H1 (cell line): ENCODE measurements at regions of chr3 and their contacts with region 1.

Region 1: GRCh38 chr3:52231502-52232293 is 6.3 kb upstream of the TLR9 start:
- DNase-seq: peak in 1 of 2 experiments; percentile 97
- H3K4me3 ChIP-seq: no peak overlapping the region
- H3K27ac ChIP-seq: no peak overlapping the region
- H3K4me1 ChIP-seq: peaks cover 0 to 11% (median 5%) of the 10 kb centered on the region in 4 experiments; a peak in 5 of 7 replicates
- H3K27me3 ChIP-seq: no peaks in the 10 kb centered on the region
- CTCF ChIP-seq: peak in 2 of 3 experiments; percentile 84 to 98; a peak in 3 of 4 replicates
- EP300 ChIP-seq: no peak
- POLR2A ChIP-seq: no peak
- RAD21 ChIP-seq: peak; percentile 79 to 81

Region 2: GRCh38 chr3:52245322-52246263 is 13.9 kb after region 1 on chr3 and contains the start of gene PPM1M:
- CTCF ChIA-PET with region 1: interaction called, 336 read pairs
- POLR2A ChIA-PET with region 1: interaction called, 27 read pairs
- DNase-seq: peak in 1 of 2 experiments; percentile 83
- H3K4me3 ChIP-seq: peak within 1 kb of the TSS; percentile 32 to 58 (median 51)
- H3K27ac ChIP-seq: no peak within 1 kb of the TSS
- H3K4me1 ChIP-seq: peaks cover 5 to 18% (median 14%) of the 10 kb centered on the region in 4 experiments
- H3K27me3 ChIP-seq: peaks cover 6 to 37% (median 23%) of the 10 kb centered on the region in 4 experiments; a peak in 6 of 7 replicates
- CTCF ChIP-seq: no peak
- EP300 ChIP-seq: no peak
- POLR2A ChIP-seq: no peak
- RAD21 ChIP-seq: no peak
- total RNA-seq, gene PPM1M: 5.2 and 5.4 TPM in 2 replicates

Region 3: DNA sequence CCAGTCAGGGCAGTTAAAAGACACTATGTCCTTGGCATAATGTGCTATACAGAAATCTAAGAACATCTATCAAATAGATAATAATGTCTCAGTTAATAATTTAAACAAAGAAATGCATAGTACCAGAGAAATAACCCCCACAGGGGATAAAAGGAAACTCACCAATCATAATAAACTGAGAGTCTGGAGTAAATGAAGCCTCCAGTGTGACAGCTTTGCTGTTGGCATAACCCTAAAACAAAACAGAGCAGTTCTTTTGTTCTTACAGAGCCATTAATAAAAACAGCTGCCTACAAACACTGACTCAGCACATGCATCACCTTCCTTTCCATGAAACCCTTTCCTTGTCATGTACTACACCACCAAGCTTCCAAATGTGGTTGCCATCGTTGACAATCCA is 27.3 kb after region 1 on chr3:
- CTCF ChIA-PET with region 1: interaction called, 126 read pairs
- POLR2A ChIA-PET with region 1: no interaction called
- DNase-seq: no peak
- H3K4me3 ChIP-seq: no peak overlapping the region
- H3K27ac ChIP-seq: no peak overlapping the region
- H3K4me1 ChIP-seq: no peaks in the 10 kb centered on the region
- H3K27me3 ChIP-seq: no peaks in the 10 kb centered on the region
- CTCF ChIP-seq: no peak
- EP300 ChIP-seq: no peak
- POLR2A ChIP-seq: no peak
- RAD21 ChIP-seq: no peak

Region 4: GRCh38 chr3:52299879-52300611 is 68.3 kb after region 1 on chr3:
- CTCF ChIA-PET with region 1: interaction called, 26 read pairs
- POLR2A ChIA-PET with region 1: no interaction called
- DNase-seq: peak in 1 of 2 experiments; percentile 67
- H3K4me3 ChIP-seq: peak overlapping the region; percentile 7 to 57 (median 44); a peak in 7 of 8 replicates
- H3K27ac ChIP-seq: no peak overlapping the region
- H3K4me1 ChIP-seq: peaks cover 0 to 26% (median 20%) of the 10 kb centered on the region in 4 experiments; a peak in 6 of 7 replicates
- H3K27me3 ChIP-seq: peaks cover 0 to 8% (median 2%) of the 10 kb centered on the region in 4 experiments; a peak in 3 of 7 replicates
- CTCF ChIP-seq: peak in 1 of 3 experiments; percentile 15; a peak in 1 of 4 replicates
- EP300 ChIP-seq: no peak
- POLR2A ChIP-seq: no peak
- RAD21 ChIP-seq: no peak

Region 5: GRCh38 chr3:52346623-52347530 is 115.2 kb after region 1 on chr3:
- CTCF ChIA-PET with region 1: interaction called, 131 read pairs
- POLR2A ChIA-PET with region 1: interaction called, 3 read pairs
- DNase-seq: no peak
- H3K4me3 ChIP-seq: no peak overlapping the region
- H3K27ac ChIP-seq: no peak overlapping the region
- H3K4me1 ChIP-seq: no peaks in the 10 kb centered on the region
- H3K27me3 ChIP-seq: no peaks in the 10 kb centered on the region; a peak in 1 of 7 replicates
- CTCF ChIP-seq: no peak
- EP300 ChIP-seq: no peak
- POLR2A ChIP-seq: no peak
- RAD21 ChIP-seq: no peak

Region 6: DNA sequence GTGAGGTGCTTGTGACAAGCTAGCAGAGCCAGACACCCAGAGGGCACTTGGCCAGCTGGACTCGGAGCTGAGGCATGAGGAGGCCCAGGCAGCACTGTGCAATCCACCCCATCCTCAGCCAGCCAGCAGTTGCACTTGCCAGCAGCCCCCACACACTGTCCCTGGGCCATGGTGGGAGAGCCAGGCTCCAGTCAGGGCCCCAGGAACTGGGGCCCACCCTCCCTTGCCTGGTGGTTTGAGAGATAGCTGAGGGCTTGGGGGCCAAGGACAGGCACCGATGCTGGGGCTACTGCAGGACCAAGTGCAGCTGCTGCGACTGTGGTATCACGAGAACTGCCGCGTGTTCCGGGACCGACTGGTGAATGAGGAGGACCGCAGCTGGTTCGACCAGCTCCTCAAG is 147.9 kb after region 1 on chr3:
- CTCF ChIA-PET with region 1: interaction called, 67 read pairs
- POLR2A ChIA-PET with region 1: no interaction called
- DNase-seq: no peak
- H3K4me3 ChIP-seq: no peak overlapping the region
- H3K27ac ChIP-seq: no peak overlapping the region
- H3K4me1 ChIP-seq: no peaks in the 10 kb centered on the region; a peak in 1 of 7 replicates
- H3K27me3 ChIP-seq: no peaks in the 10 kb centered on the region; a peak in 3 of 7 replicates
- CTCF ChIP-seq: no peak
- EP300 ChIP-seq: no peak
- POLR2A ChIP-seq: no peak
- RAD21 ChIP-seq: no peak

Region 7: DNA sequence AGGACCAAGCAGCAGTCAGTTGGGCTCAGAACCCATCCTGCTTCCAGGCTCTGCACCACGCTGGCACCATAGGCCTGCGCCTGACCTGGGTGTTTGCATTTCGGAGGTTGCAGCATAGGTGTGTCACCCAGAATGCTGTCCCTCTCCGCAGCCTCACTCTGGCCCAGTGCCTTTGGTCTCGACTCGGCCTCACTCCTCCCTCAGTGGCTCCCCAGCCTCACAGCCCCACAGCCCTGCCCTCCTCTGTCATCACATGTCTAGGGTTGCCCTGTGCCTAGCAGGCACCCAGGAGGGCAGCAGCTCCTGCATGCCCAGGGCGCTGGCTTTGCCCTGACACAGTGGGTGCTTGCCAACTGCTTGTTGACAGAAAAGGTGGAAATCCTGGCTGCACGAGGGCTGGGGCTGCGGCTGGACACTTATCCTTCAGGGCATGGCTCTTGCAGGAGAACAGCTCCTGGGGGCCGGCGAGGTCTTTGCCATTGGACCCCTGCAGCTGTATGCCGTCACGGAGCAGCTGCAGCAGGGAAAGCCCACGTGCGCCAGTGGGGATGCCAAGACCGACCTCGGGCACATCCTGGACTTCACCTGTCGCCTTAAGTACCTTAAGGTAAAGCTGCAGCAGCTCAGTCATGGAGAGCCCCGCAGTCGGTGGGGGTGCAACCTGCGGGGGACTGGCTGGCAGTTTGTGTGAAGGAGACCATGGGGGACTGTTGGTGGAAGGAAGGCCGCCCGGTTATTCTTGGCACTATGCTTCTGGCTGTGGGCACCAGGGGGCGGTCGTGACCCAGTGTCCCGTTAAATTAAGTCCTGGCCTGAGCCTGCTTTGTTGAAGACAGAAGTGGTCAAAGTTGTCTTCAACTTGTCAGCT is 239.9 kb after region 1 on chr3:
- CTCF ChIA-PET with region 1: no interaction called
- POLR2A ChIA-PET with region 1: no interaction called
- DNase-seq: peak in 1 of 2 experiments; percentile 85
- H3K4me3 ChIP-seq: no peak overlapping the region
- H3K27ac ChIP-seq: no peak overlapping the region
- H3K4me1 ChIP-seq: no peaks in the 10 kb centered on the region; a peak in 3 of 7 replicates
- H3K27me3 ChIP-seq: no peaks in the 10 kb centered on the region; a peak in 1 of 7 replicates
- CTCF ChIP-seq: peak; percentile 59 to 87 (median 76)
- EP300 ChIP-seq: no peak
- POLR2A ChIP-seq: no peak
- RAD21 ChIP-seq: peak; percentile 63 to 72